Heart left ventricle (tissue), 16 donors: ENCODE measurements at regions of chr20 and their contacts with region 1.

Region 1: GRCh38 chr20:3932681-3933080 is 43.5 kb downstream of the PANK2 start:
- DNase-seq: no peak
- ATAC-seq: peak in 1 of 4 donors; percentile 38
- H3K4me3 ChIP-seq: peak overlapping the region in 11 of 12 donors; percentile 3 to 56 (median 46)
- H3K27ac ChIP-seq: peak overlapping the region in 11 of 12 donors; percentile 12 to 85 (median 66)
- H3K4me1 ChIP-seq: peaks cover 10 to 72% (median 48%) of the 10 kb centered on the region in 12 donors
- H3K27me3 ChIP-seq: no peaks in the 10 kb centered on the region
- CTCF ChIP-seq: no peak
- POLR2A ChIP-seq: no peak

Region 2: DNA sequence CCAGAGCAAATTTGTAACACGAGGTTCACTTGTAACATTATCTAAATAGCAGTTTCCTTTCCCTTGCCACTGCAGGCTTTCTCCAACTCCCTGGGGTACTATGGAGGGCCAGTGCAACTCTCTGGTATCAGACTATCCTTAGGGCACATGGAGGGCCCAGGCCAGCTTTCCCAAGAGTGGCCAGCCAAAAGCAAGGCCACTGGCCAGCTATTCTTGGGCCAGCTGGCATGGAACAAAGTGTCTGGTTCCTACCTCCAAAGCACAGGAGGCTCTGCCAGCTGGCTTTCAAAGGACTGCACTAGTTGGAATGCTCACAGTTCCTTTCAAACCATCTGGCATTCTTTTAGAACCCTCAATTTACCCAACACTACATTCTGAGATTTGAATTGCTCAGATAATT is 74.0 kb after region 1 on chr20:
- intact Hi-C with region 1: loop called in 1 of 10 experiments (anchors 5 kb)
- DNase-seq: peak; percentile 63 to 83 (median 73)
- ATAC-seq: peak; percentile 91 to 96 (median 96)
- H3K4me3 ChIP-seq: no peak overlapping the region
- H3K27ac ChIP-seq: peak overlapping the region in 10 of 12 donors; percentile 8 to 43 (median 27)
- H3K4me1 ChIP-seq: peaks cover 0 to 44% (median 20%) of the 10 kb centered on the region in 12 donors
- H3K27me3 ChIP-seq: no peaks in the 10 kb centered on the region
- CTCF ChIP-seq: no peak
- POLR2A ChIP-seq: no peak

Region 3: DNA sequence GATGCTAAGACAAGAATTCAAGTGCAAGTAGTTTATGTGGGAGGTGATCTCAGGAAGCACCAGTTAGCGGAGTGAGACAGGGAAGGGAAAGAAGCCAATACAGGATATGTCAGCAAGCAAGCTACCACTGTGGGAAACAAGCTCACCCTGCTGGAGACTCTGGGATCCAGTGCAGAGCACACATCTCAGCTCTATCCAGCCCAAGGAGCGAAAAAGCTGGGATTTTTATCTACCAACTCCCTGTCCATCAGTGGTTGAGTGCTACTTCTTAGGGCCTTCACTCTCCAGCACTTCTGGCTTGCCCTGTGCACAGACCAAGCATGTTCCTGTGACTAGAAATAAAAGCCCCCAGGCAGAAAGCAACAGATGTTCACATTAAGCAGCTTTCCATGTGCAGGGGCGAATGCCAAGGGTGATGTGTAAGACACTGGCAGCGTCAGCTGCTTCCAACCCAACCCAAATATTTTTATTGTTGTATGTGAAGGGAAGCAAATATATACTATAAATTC is 93.5 kb after region 1 on chr20:
- intact Hi-C with region 1: no loop called
- DNase-seq: peak in 1 of 5 donors; percentile 60
- ATAC-seq: peak in 3 of 4 donors; percentile 86 to 91 (median 90)
- H3K4me3 ChIP-seq: no peak overlapping the region
- H3K27ac ChIP-seq: peak overlapping the region in 2 of 12 donors; percentile 10 to 11
- H3K4me1 ChIP-seq: peaks cover 0 to 26% (median 10%) of the 10 kb centered on the region in 12 donors
- H3K27me3 ChIP-seq: no peaks in the 10 kb centered on the region
- CTCF ChIP-seq: peak in 9 of 12 donors; percentile 12 to 61 (median 41)
- POLR2A ChIP-seq: no peak